Left cardiac atrium (tissue), 4 donors: ENCODE measurements at regions of chr19 and their contacts with region 1.

Region 1: DNA sequence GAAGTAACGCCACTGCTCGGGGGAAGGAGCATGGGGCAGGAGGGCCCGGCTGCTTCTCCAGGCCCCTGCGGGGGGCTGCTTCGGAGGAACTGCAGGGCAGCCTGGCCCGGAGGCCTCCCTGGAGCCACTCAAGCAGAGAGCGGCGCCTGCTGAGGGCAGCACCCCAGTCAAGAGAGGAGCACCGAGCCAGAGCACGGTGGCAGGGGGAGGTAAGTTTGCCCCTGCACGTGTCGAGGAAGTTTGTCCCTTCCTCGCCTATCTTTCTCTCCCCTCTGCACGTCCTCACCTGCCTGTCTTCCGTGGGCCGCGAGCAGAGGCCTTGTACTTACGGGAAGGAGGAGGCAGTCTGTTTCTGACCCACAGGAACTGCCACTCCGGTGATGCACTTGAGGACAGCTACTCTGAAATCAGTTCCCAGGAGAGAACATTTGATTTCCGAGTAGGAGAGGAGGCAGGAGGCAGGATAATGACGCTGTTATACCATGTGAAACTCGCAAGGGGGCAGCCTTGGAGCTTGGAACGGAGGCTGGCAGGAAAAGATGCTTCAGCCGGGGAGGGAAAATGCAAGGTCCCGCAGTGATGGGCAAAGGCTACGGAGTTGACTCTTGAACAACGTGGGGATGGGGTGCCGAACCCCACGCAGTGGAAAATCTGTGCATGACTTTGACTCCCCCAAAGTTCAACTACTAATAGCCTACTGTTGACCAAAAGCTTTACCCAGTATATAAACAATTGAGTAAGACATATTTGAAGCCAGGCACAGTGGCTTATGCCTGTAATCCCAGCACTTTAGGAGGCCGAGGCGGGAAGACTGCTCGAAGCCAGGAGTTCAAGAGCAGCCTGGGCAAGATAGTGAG is 5.0 kb downstream of the FFAR1 start:
- DNase-seq: peak; percentile 71
- ATAC-seq: peak; percentile 75 to 76

Region 2: GRCh38 chr19:35466259-35466658 is 113.6 kb after region 1 on chr19:
- intact Hi-C with region 1: loop called (anchors 2 to 5 kb)
- DNase-seq: no peak
- ATAC-seq: no peak

Region 3: DNA sequence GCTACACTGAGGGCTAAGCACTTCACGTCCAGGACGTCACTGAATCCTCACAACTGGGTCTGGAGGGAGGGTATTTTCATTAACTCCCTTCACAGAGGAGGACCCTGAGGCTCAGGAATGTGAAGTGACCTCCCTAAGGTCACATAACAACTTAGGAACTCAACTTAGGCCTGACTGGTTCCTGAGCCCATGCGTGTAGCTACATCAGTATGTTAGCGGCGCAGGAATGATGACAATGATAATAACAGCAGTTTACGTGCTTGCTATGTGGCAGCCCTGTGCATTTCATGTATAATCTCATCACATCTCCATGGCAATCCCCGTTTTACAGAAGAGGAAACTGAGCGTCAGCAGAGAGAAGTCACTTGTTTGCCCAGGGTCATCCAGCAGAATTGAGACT is 119.3 kb after region 1 on chr19:
- intact Hi-C with region 1: loop called (anchors 2 to 5 kb)
- DNase-seq: no peak
- ATAC-seq: no peak

Region 4: GRCh38 chr19:35495107-35496064 is 142.7 kb after region 1 on chr19:
- intact Hi-C with region 1: loop called in 1 of 2 experiments (anchors 1 kb)
- DNase-seq: peak; percentile 74
- ATAC-seq: peak; percentile 92 to 94

Region 5: GRCh38 chr19:35790981-35791813 is 438.5 kb after region 1 on chr19:
- intact Hi-C with region 1: no loop called
- DNase-seq: no peak
- ATAC-seq: no peak